ENCODE measurements at regions of chrX and their contacts with region 1.

Region 1: GRCh38 chrX:152941328-152942106 is 43.6 kb downstream of the ZNF185 start:
- DNase-seq: peak; percentile 81 to 92 (median 88)
- ATAC-seq: peak; percentile 96 to 98
- H3K4me3 Mint-ChIP-seq: peak overlapping the region; percentile 74 to 89 (median 88)
- H3K27ac Mint-ChIP-seq: peak overlapping the region in 9 of 10 donors; percentile 81 to 93 (median 89)
- H3K4me1 Mint-ChIP-seq: peaks cover 0 to 18% (median 9%) of the 10 kb centered on the region in 4 donors
- H3K27me3 Mint-ChIP-seq: no peaks in the 10 kb centered on the region

Region 2: GRCh38 chrX:152897222-152898131 is 44.0 kb before region 1 on chrX and contains the start of gene ZNF185:
- POLR2A ChIA-PET with region 1: no interaction called
- DNase-seq: no peak
- ATAC-seq: no peak
- H3K4me3 Mint-ChIP-seq: peak within 1 kb of the TSS in 8 of 10 donors; percentile 21 to 63 (median 52)
- H3K27ac Mint-ChIP-seq: no peak within 1 kb of the TSS
- H3K4me1 Mint-ChIP-seq: peaks cover 0 to 5% (median 0%) of the 10 kb centered on the region in 4 donors
- H3K27me3 Mint-ChIP-seq: peaks cover 5 to 34% (median 18%) of the 10 kb centered on the region in 5 donors
- polyA plus RNA-seq, gene ZNF185: 1.8 to 2.8 (median 2.6) TPM

Region 3: GRCh38 chrX:152926279-152926678 is 15.2 kb before region 1 on chrX:
- POLR2A ChIA-PET with region 1: no interaction called
- DNase-seq: peak in 7 of 10 donors; percentile 17 to 47 (median 28)
- ATAC-seq: peak; percentile 79 to 84
- H3K4me3 Mint-ChIP-seq: no peak overlapping the region
- H3K27ac Mint-ChIP-seq: no peak overlapping the region
- H3K4me1 Mint-ChIP-seq: peaks cover 14 to 28% (median 21%) of the 10 kb centered on the region in 4 donors
- H3K27me3 Mint-ChIP-seq: peaks cover 0 to 3% (median 0%) of the 10 kb centered on the region in 5 donors

Region 4: DNA sequence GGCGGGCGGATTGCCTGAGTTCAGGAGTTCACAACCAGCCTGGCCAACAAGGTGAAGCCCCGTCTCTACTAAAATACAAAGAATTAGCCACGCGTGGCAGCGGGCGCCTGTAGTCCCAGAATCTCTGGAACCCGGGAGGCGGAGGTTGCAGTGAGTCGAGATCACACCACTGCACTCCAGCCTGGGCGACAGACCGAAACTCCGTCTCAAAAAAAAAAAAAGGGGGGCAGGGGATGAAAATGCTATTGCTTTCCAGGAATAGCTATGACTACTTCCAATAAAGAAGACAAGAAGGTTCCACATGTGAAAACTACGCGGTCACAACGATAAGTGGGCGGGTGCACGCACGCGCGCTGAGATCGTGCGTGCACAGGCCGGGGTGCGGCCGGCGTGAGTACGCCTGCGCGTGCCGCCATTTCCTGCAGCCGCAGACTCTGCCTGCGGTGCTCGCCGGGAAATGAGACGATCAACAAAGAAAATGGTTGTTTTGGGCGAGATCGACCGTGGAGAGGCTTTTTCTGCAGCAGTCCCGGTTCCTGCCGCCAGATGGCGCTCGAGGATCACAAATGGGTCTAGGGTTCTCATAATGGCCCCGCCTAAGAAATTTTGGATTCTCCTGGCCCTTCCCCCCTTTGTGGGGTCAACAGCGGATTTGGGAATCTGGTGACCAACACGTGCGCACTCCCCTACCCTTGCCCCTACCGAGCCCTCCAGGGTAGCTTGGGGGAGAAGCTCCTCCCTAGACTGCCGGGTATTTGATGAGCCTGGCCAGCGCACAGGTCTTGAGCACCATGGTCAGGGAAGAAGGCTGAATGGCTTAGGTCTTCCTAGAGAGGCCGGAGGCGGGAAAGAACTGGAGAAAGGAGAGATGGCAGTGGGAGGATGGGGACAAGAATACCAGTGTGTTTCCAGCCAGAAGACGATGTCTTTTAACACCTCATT is 17.3 kb after region 1 on chrX:
- POLR2A ChIA-PET with region 1: interaction called, 12 read pairs
- DNase-seq: peak; percentile 76 to 97 (median 88)
- ATAC-seq: peak; percentile 99
- H3K4me3 Mint-ChIP-seq: peak overlapping the region; percentile 67 to 86 (median 81)
- H3K27ac Mint-ChIP-seq: peak overlapping the region; percentile 88 to 95 (median 93)
- H3K4me1 Mint-ChIP-seq: peaks cover 0 to 9% (median 4%) of the 10 kb centered on the region in 4 donors
- H3K27me3 Mint-ChIP-seq: no peaks in the 10 kb centered on the region

Region 5: GRCh38 chrX:153032397-153033118 is 91.0 kb after region 1 on chrX:
- POLR2A ChIA-PET with region 1: interaction called, 12 read pairs
- DNase-seq: peak; percentile 14 to 73 (median 52)
- ATAC-seq: peak; percentile 76 to 87
- H3K4me3 Mint-ChIP-seq: peak overlapping the region; percentile 72 to 91 (median 86)
- H3K27ac Mint-ChIP-seq: peak overlapping the region; percentile 76 to 97 (median 91)
- H3K4me1 Mint-ChIP-seq: peaks cover 0 to 20% (median 7%) of the 10 kb centered on the region in 4 donors
- H3K27me3 Mint-ChIP-seq: peaks cover 0 to 5% (median 0%) of the 10 kb centered on the region in 5 donors

Measured in naive thymus-derived CD8-positive, alpha-beta T cell (primary cell).